ENCODE measurements at regions of chr17 and their contacts with region 1.

Region 1: DNA sequence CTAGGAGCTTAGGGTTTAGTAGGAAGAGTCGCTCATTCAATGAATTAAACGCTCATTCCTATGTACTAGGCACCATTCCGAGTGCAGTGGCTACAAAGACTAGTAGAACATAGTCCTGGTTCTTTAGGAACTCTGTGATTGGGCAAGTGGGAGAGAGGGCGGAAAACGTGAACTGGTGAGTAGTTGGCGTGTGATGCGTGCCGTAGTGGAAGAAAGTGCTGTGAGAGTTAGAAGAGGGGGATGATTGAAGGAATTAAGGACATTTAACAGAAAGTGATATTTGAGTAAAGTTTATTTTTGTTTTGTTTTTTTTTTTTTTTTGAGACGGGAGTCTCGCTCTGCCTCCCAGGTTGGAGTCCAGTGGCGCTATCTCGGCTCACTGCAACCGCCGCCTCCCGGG is 7.9 kb upstream of the SLFN14 start:
- DNase-seq: peak; percentile 54
- H3K4me3 ChIP-seq: peak overlapping the region; percentile 72 to 94 (median 72)
- H3K27ac ChIP-seq: peak overlapping the region; percentile 83
- H3K4me1 ChIP-seq: peaks cover 10% of the 10 kb centered on the region
- H3K27me3 ChIP-seq: peaks cover 7 to 12% of the 10 kb centered on the region in 2 experiments
- CTCF ChIP-seq: no peak
- POLR2A ChIP-seq: no peak

Region 2: DNA sequence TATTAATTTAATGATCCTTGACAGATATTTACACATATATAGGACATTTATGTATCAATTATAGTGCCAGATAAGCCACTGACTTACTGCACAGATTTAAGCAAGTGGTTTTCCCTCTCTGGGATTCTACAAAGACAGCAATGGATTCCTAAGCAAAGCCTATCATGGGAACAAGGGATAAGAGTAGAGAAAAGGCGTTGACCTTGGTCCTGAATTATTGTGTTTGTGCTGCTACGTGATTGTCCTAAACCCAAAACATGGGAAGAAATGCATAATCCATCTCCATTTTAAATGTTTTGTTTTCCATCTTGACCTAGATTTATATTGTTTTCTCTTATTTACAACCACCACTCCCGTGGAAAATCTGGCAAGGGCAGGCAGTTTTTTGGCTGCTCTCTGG is 209.1 kb before region 1 on chr17:
- CTCF ChIA-PET with region 1: no interaction called
- POLR2A ChIA-PET with region 1: no interaction called
- dilution Hi-C with region 1: no loop called
- intact Hi-C with region 1: no loop called
- DNase-seq: no peak
- H3K4me3 ChIP-seq: no peak overlapping the region
- H3K27ac ChIP-seq: no peak overlapping the region
- H3K4me1 ChIP-seq: no peaks in the 10 kb centered on the region
- H3K27me3 ChIP-seq: no peaks in the 10 kb centered on the region
- CTCF ChIP-seq: no peak
- POLR2A ChIP-seq: no peak

Region 3: DNA sequence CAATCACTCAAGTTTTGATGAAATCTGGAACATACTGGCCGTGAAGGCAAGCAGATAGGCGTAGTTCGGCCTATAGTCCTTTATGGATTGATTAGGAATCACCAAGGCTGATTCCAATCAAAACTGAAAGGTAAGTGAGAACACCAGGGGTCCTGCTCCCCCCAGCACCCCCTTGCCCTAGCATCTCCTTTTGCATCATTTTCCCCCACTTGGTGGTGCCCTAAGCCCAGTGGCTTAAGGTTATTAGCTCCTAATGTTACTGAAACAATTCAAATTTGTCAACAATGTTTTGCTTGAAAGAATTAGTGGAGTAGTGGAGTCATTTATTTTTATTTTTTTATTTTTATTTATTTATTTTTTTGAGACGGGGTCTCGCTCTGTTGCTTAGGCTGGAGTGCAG is 12.8 kb before region 1 on chr17:
- CTCF ChIA-PET with region 1: interaction called, 11 read pairs
- POLR2A ChIA-PET with region 1: no interaction called
- dilution Hi-C with region 1: no loop called
- intact Hi-C with region 1: no loop called
- DNase-seq: no peak
- H3K4me3 ChIP-seq: no peak overlapping the region
- H3K27ac ChIP-seq: no peak overlapping the region
- H3K4me1 ChIP-seq: no peaks in the 10 kb centered on the region
- H3K27me3 ChIP-seq: peaks cover 23 to 36% of the 10 kb centered on the region in 2 experiments
- CTCF ChIP-seq: peak; percentile 7 to 27
- POLR2A ChIP-seq: no peak

Region 4: GRCh38 chr17:35587074-35587971 is 18.8 kb after region 1 on chr17 and contains the start of gene AP2B1:
- CTCF ChIA-PET with region 1: interaction called, 3 read pairs
- POLR2A ChIA-PET with region 1: no interaction called
- dilution Hi-C with region 1: no loop called
- intact Hi-C with region 1: loop called (anchors 1 kb)
- DNase-seq: peak; percentile 99
- H3K4me3 ChIP-seq: peak within 1 kb of the TSS; percentile 54 to 84 (median 70)
- H3K27ac ChIP-seq: peak within 1 kb of the TSS; percentile 91
- H3K4me1 ChIP-seq: peaks cover 19% of the 10 kb centered on the region
- H3K27me3 ChIP-seq: peaks cover 4 to 6% of the 10 kb centered on the region in 2 experiments
- CTCF ChIP-seq: no peak
- POLR2A ChIP-seq: peak; percentile 81
- total RNA-seq, gene AP2B1: 198 and 200 TPM in 2 replicates

Region 5: DNA sequence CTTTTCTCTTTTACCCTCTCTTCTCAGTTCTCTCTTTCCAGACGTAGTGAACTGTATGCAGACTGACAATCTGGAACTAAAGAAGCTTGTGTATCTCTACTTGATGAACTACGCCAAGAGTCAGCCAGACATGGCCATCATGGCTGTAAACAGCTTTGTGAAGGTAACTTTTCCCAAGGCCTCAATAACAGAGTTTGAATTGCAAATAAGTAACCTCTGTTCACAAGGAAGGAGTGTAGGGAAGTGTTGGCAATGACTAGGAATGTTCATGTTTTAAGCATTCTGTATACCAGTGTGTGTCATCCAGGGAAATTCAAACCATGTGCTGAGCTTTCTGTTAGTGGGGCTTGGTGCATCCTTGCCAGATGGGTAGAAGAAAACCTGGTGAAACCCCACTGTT is 37.1 kb after region 1 on chr17:
- CTCF ChIA-PET with region 1: no interaction called
- POLR2A ChIA-PET with region 1: no interaction called
- dilution Hi-C with region 1: no loop called
- intact Hi-C with region 1: no loop called
- DNase-seq: no peak
- H3K4me3 ChIP-seq: no peak overlapping the region
- H3K27ac ChIP-seq: no peak overlapping the region
- H3K4me1 ChIP-seq: no peaks in the 10 kb centered on the region
- H3K27me3 ChIP-seq: no peaks in the 10 kb centered on the region
- CTCF ChIP-seq: no peak
- POLR2A ChIP-seq: no peak

Region 6: GRCh38 chr17:35743626-35744328 is 175.2 kb after region 1 on chr17:
- CTCF ChIA-PET with region 1: no interaction called
- POLR2A ChIA-PET with region 1: no interaction called
- dilution Hi-C with region 1: no loop called
- intact Hi-C with region 1: no loop called
- DNase-seq: peak; percentile 30
- H3K4me3 ChIP-seq: no peak overlapping the region
- H3K27ac ChIP-seq: no peak overlapping the region
- H3K4me1 ChIP-seq: no peaks in the 10 kb centered on the region
- H3K27me3 ChIP-seq: peaks cover 27 to 37% of the 10 kb centered on the region in 2 experiments
- CTCF ChIP-seq: no peak
- POLR2A ChIP-seq: no peak